ENCODE measurements at regions of chr14 and their contacts with region 1.

Region 1: DNA sequence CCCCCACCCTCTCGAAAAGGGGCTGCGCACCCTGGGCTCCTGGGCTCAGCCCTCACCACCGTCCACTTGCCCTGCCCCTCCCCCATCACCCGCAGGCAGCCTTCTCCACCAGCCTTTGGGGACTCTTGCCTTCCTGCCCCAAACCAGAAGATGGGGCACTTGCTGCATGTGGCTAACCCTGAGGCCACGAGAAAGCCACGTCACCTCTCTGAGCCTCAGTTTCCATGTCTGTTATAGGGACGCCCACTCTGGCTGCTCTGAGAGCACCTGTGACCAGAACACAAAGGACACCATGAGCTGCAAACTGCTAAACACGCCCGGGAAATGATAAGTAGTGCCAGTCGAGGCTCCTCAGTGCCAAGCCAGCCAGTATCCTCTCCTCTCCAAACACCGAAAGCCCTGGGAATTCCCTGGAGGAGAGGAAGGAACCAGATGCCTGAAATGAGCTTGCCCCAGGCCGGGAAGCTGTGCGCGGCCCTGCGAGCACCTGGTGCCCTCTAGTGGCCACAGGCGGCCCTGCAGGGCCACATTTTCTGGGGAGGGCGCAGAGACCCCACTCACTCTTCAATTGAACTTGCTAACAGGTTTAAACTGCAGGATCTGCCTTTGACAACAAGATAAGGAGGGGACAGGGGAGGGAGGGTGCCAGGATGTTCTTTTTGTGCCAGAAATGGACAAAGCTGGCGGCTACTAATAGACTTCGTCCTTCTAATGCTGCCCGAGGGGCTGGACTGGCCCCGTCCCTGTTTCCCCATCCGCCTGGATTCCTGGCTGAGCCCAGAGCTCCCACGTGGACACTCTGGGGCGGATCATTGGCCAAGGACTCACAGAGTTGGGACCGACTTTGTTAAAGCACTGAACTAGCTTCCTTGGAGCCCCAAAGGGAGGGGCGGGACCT is 10.2 kb upstream of the SERPINA9 start:
- DNase-seq: no peak
- H3K4me3 ChIP-seq: no peak overlapping the region
- H3K27ac ChIP-seq: no peak overlapping the region
- H3K4me1 ChIP-seq: peaks cover 0 to 6% of the 10 kb centered on the region in 2 donors
- H3K27me3 ChIP-seq: no peaks in the 10 kb centered on the region
- CTCF ChIP-seq: peak; percentile 82 to 99 (median 87)

Region 2: DNA sequence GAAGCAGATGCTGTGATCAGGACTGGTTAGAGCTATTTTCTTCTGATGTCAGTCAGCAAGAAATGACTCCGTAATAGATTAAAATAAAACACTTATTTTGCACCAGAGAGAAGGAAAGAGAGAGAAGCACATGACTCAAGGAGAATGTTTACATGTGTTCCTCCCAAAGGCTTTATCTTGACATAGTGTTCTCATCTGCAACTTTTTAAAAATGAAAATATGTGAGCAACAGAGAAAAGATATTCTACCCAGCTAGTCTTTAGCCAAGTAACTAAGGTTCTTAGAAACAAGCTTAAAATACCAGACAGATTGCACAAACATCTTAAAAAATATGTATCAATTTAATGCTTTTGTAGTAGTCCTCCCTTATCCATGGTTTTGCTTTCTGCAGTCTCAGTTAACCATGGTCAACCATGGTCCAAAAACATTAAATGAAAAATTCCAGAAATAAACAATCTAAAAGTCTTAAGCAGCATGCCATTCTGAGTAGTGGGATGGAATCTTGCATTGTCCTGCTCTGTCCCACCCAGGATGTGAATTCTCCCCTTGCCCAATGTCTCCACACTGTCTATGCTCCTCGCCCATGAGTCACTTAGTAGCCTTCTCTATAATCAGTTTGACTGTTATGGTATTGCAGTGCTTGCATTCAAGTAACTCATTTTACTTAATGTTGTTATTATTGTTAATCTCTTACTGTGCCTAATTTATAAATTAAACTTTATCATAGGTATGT is 203.0 kb before region 1 on chr14:
- intact Hi-C with region 1: no loop called
- DNase-seq: no peak
- H3K4me3 ChIP-seq: no peak overlapping the region
- H3K27ac ChIP-seq: no peak overlapping the region
- H3K4me1 ChIP-seq: no peaks in the 10 kb centered on the region
- H3K27me3 ChIP-seq: no peaks in the 10 kb centered on the region
- CTCF ChIP-seq: no peak

Region 3: DNA sequence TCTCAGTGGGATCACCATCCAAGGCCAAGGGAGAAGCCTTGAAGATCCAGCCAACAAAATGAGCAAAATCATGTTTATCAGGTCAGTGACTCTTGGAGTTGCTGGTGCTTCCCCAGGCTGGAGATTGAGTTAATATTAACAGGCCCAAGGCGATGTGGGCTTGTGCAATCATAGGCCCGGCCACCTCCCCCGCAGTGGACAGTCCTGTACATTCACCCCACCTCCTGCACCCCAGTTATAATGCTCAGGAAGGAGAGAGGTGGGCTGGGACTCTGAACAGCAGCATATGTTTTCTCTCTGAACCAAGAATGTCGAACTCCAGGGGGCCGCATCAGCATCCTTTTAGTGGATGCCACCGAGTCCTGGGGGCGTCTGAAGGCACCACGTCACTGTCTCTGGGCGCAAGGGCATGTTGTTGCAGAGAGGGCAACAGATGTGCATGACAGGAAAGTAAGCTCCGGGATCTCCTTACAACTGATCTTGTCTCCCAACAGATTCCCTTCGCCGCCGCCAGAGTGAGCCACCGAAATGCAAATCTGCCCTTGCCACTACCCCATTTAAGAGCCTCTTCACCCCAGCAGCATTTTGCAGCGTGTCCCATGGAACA is 130.9 kb before region 1 on chr14:
- intact Hi-C with region 1: loop called (anchors 2 kb)
- DNase-seq: peak in 1 of 2 donors; percentile 67
- H3K4me3 ChIP-seq: no peak overlapping the region
- H3K27ac ChIP-seq: no peak overlapping the region
- H3K4me1 ChIP-seq: no peaks in the 10 kb centered on the region
- H3K27me3 ChIP-seq: no peaks in the 10 kb centered on the region
- CTCF ChIP-seq: peak in 1 of 3 experiments; percentile 34

Region 4: GRCh38 chr14:94728950-94729349 is 242.8 kb after region 1 on chr14:
- intact Hi-C with region 1: no loop called
- DNase-seq: no peak
- H3K4me3 ChIP-seq: no peak overlapping the region
- H3K27ac ChIP-seq: no peak overlapping the region
- H3K4me1 ChIP-seq: no peaks in the 10 kb centered on the region
- H3K27me3 ChIP-seq: no peaks in the 10 kb centered on the region
- CTCF ChIP-seq: no peak